ENCODE measurements at regions of chr7 and their contacts with region 1.

Region 1: GRCh38 chr7:32942786-32943653 is 14.2 kb upstream of the FKBP9 start:
- DNase-seq: peak; percentile 74
- H3K4me3 ChIP-seq: peak overlapping the region; percentile 60 to 69 (median 64)
- H3K27ac ChIP-seq: peak overlapping the region; percentile 67
- H3K4me1 ChIP-seq: peaks cover 3% of the 10 kb centered on the region
- H3K27me3 ChIP-seq: no peaks in the 10 kb centered on the region
- CTCF ChIP-seq: peak; percentile 20 to 63

Region 2: DNA sequence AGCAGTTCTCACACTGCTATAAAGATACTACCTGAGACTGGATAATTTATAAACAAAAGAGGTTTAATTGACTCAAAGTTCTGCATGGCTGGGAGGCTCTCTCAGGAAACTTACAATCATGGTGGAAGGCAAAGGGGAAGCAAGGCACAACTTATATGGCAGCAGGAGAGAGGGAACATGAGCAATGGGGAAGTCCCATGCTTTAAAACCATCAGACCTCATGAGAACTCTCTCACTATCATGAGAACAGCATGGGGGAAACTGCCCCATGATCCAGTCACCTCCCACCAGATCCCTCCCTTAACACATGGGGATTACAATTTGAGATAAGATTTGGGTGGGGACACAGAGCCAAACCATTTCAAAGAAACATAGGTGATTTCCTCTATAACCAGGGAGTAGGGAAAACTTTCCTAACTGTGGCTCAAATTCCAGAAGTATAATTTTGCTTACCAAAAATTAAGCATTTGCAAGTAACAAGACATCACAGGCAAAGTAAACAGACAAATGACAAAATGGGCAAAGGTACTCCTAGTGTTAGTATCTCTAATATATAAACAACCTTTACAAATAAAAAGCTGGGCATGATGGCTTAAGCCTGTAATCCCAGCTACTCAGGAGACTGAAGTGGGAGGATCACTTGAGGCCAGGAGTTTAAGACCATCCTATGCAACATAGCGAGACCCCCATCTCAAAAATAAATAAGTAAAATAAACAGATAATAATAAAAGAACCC is 139.4 kb before region 1 on chr7:
- CTCF ChIA-PET with region 1: interaction called, 3 read pairs
- dilution Hi-C with region 1: no loop called
- in situ Hi-C with region 1: no loop called
- intact Hi-C with region 1: loop called (anchors 2 kb)
- DNase-seq: no peak
- H3K4me3 ChIP-seq: no peak overlapping the region
- H3K27ac ChIP-seq: no peak overlapping the region
- H3K4me1 ChIP-seq: no peaks in the 10 kb centered on the region
- H3K27me3 ChIP-seq: no peaks in the 10 kb centered on the region
- CTCF ChIP-seq: no peak

Region 3: DNA sequence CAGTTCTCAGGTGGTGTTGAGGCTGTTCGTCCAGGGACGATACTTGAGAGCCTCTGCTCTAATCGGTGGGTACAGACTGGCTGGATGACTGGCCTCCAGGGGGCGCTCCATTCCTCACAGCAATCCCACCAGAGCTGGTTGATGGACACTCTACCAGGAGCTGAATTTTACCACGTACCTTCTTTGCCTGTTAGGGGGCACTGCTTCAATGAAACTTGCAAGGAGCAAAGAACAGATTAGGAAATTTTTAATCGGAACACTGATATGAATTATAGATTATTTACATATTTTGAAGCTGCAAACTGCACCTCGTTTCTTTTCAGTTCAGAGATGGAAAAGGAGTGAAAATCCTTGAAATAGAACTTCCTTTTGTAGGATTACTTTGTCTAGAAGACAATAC is 96.3 kb before region 1 on chr7:
- CTCF ChIA-PET with region 1: no interaction called
- dilution Hi-C with region 1: no loop called
- in situ Hi-C with region 1: no loop called
- intact Hi-C with region 1: loop called (anchors 1 kb)
- DNase-seq: peak; percentile 51
- H3K4me3 ChIP-seq: no peak overlapping the region
- H3K27ac ChIP-seq: no peak overlapping the region
- H3K4me1 ChIP-seq: no peaks in the 10 kb centered on the region
- H3K27me3 ChIP-seq: no peaks in the 10 kb centered on the region
- CTCF ChIP-seq: peak; percentile 63 to 76

Region 4: GRCh38 chr7:32891800-32892520 is 51.1 kb before region 1 on chr7:
- CTCF ChIA-PET with region 1: no interaction called
- dilution Hi-C with region 1: loop called (anchors 5 kb)
- in situ Hi-C with region 1: no loop called
- intact Hi-C with region 1: loop called (anchors 2 kb)
- DNase-seq: peak; percentile 95
- H3K4me3 ChIP-seq: peak overlapping the region; percentile 85 to 91 (median 85)
- H3K27ac ChIP-seq: peak overlapping the region; percentile 96
- H3K4me1 ChIP-seq: peaks cover 24% of the 10 kb centered on the region
- H3K27me3 ChIP-seq: no peaks in the 10 kb centered on the region
- CTCF ChIP-seq: no peak

Region 5: DNA sequence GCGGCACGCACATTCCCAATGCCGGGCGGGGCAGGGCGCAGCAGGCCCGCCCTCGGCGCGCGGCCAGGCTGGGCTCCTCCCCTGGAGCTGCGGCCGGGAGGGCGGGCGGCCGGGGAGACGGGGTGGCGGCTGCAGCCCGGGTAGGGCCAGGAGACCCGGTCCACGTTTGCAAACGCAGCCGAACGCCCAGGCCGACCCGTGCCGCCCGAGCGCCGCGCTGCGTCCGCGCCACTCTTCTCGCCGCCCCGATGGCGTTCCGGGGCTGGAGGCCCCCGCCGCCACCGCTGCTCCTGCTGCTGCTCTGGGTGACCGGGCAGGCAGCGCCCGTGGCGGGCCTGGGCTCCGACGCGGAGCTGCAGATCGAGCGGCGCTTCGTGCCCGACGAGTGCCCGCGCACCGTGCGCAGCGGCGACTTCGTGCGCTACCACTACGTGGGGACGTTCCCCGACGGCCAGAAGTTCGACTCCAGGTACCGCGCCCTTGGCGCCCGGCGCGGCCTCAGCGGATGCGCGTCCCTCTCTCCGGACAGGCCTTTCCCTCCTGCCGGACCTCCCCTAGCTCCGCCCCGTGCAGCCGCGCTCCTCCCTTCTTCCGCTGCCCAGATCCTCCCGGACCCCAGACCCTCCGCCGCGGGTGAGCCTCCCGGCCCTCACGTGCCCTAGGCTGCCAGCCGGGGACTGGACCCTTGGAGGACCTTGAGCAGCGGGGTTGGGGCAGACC is 14.5 kb after region 1 on chr7 and contains the start of gene FKBP9:
- CTCF ChIA-PET with region 1: no interaction called
- dilution Hi-C with region 1: no loop called
- in situ Hi-C with region 1: no loop called
- intact Hi-C with region 1: loop called (anchors 2 kb)
- DNase-seq: peak; percentile 79
- H3K4me3 ChIP-seq: peak within 1 kb of the TSS; percentile 61 to 74 (median 70)
- H3K27ac ChIP-seq: peak within 1 kb of the TSS; percentile 74
- H3K4me1 ChIP-seq: peaks cover 3% of the 10 kb centered on the region
- H3K27me3 ChIP-seq: no peaks in the 10 kb centered on the region
- CTCF ChIP-seq: no peak
- total RNA-seq, gene FKBP9: 129 to 301 TPM

Region 6: DNA sequence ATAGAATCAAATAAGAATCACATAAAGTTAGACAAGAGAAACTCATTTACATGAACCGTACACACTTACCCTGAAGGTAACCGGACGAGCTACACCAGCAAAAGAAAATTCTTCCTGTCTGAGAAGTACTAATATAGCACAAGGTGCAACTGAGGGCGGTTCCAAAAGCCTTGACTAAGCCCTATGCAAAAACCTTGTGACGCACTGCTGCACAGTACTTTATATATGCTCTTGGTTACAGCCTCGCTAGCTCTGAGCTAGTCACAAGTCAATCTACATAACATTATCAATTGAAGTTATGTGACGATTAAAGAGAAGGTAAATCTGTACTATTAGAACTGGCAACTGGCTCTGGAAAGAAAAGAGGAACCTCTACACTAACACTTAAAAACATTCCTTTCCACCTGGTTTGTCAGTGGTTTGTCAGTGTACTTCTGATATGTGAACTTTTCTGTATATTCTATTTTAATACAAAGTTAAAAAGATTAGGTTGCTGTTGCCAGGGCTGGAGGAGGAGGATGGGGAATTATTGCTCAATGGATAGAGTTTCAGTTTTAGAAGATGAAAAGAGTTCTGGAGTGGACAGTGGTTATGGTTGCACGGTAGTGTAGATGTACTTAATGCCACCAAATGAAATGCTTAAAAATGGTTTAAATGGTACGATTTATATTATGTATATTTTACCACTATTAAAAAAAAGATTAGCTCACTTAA is 97.9 kb after region 1 on chr7:
- CTCF ChIA-PET with region 1: interaction called, 5 read pairs
- dilution Hi-C with region 1: no loop called
- in situ Hi-C with region 1: no loop called
- intact Hi-C with region 1: loop called (anchors 2 kb)
- DNase-seq: peak; percentile 90
- H3K4me3 ChIP-seq: peak overlapping the region; percentile 30 to 40 (median 33)
- H3K27ac ChIP-seq: peak overlapping the region; percentile 89
- H3K4me1 ChIP-seq: no peaks in the 10 kb centered on the region
- H3K27me3 ChIP-seq: no peaks in the 10 kb centered on the region
- CTCF ChIP-seq: no peak